WTC11 (cell line): ENCODE measurements at regions of chr10 and their contacts with region 1.

Region 1: DNA sequence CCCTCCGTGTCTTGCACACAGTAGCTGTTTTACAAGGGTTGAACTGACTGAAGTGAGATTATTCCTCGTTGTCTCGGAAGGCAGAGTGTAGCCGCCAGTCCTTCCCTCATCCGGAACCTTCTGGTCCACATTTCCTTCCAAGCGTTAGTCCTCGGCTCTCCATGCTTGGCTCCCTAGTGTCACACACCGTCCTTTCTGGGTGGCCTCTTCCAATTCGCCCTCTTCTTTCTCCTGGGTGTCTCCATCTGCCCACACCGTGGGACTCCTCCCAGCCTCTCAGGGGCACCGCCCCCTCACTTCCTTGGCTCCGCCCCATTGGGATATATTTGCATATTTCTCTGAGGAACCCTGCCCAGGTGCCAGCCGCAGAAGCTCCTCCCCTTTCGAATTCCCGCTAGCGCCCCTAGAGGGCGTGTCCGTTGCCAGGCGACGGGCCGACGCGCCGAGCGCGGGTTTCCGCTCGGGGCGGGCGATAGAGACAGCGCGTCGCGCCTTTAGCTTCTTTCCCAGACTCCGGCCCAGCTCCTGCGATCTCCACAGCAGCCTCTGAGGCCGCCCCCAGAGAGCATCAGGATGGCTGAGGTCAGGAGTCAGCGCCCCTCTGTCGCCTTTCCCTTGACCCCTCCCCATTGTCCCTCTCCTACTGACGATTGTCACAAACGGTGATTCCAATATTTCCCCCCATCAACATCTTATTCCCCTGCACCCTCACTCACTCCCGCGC is at the start of gene CFAP58:
- DNase-seq: peak; percentile 98
- ATAC-seq: peak; percentile 96
- H3K4me3 Mint-ChIP-seq: no peak within 1 kb of the TSS
- H3K27ac Mint-ChIP-seq: no peak within 1 kb of the TSS
- H3K4me1 Mint-ChIP-seq: peaks cover 9% of the 10 kb centered on the region
- H3K27me3 Mint-ChIP-seq: peaks cover 10% of the 10 kb centered on the region
- CTCF ChIP-seq: peak; percentile 73
- total RNA-seq, gene CFAP58: 0.92 to 1.1 TPM (median 1.0 TPM) in 3 replicates

Region 2: DNA sequence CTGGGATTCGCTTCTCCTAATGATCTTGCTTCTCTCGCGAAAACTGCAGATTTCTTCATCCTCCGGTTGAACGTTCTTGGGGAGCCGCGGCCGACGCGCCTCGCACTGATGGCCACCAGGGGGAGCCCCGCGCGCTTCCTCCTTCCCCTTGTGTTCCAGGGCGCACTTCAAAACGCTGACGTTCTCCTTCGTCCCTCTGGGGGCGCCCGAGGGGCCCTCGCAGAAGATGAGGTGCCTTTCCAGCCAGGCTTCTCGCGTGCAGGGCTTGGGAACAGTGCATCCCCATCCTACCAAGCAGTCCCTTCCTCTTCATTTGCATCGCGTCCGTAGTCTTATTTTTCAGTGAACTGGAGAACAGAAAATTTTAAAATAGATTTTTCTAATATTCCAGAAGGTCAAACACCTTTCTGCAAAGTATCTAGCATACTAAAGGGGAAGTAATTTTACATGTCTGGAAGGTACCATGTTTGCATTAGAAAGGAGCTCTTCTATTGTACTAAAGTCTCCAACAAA is 62.0 kb before region 1 on chr10:
- CTCF ChIA-PET with region 1: interaction called, 30 read pairs
- POLR2A ChIA-PET with region 1: interaction called, 3 read pairs
- DNase-seq: peak; percentile 90
- ATAC-seq: peak; percentile 99
- H3K4me3 Mint-ChIP-seq: peak overlapping the region; percentile 40
- H3K27ac Mint-ChIP-seq: no peak overlapping the region
- H3K4me1 Mint-ChIP-seq: peaks cover 23% of the 10 kb centered on the region
- H3K27me3 Mint-ChIP-seq: peaks cover 7% of the 10 kb centered on the region
- CTCF ChIP-seq: peak; percentile 99

Region 3: DNA sequence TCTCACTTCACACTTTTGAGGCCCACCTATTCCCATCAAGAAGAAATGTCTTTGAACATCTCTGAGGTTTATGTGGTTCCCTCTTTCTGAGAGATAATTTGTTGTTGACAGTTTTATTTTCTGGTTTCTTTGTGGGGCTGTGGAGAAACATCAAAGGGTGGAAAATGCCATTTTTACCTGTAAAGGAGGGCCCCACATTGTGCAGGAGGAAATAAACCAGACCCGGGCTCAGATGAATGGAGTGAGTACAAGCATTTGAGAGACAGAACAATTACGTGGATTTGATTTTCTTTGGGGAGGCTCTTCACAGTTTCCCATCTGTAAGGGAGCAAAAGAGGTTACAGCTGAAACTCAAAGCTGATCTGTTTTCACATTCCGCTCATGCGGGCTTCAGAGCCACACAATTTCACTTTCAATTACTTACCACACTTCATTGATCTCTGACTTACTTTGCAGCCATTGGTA is 45.0 kb before region 1 on chr10:
- CTCF ChIA-PET with region 1: interaction called, 55 read pairs
- POLR2A ChIA-PET with region 1: interaction called, 5 read pairs
- DNase-seq: no peak
- ATAC-seq: no peak
- H3K4me3 Mint-ChIP-seq: no peak overlapping the region
- H3K27ac Mint-ChIP-seq: no peak overlapping the region
- H3K4me1 Mint-ChIP-seq: peaks cover 6% of the 10 kb centered on the region
- H3K27me3 Mint-ChIP-seq: no peaks in the 10 kb centered on the region
- CTCF ChIP-seq: no peak

Region 4: DNA sequence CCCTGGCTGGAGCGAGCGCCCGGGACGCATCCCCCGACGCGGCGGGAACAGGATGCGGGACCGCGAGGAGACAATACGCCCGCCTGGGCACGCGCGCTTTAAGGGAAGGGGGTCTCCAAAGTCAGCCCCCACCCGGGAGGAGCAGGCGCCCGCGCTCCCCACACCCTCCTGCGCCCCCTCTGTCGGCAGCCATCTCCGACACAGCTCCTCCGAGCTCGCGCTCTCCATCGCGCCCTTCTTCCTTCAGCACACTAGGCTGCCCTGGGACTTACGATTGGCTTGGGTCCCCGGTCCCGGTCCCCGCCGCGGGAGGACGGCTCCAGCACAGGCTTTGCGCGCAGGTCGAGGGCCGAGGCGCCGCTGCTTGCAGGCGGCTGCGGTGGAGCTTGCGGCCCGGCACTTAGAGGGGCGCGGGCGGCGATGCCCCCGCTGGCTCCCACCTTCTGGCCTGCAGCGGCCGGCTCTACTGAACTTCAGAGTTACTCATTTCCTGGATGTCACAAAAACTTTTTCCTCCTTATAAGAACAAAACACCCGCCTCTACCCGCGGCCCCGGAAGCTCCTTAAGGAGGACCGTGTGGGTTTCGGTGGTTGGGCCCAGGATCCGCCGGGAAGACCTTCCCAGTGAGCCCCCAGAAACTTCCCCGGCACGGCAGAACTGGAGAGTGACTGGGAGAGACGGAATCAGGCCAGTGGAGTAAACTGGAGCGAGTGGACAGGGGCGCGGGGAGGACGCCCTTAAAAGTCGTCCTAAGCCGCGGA is 15.3 kb before region 1 on chr10 and contains the start of gene ITPRIP:
- CTCF ChIA-PET with region 1: interaction called, 27 read pairs
- POLR2A ChIA-PET with region 1: interaction called, 14 read pairs
- DNase-seq: peak; percentile 68
- ATAC-seq: peak; percentile 63
- H3K4me3 Mint-ChIP-seq: peak within 1 kb of the TSS; percentile 93
- H3K27ac Mint-ChIP-seq: peak within 1 kb of the TSS; percentile 99
- H3K4me1 Mint-ChIP-seq: peaks cover 60% of the 10 kb centered on the region
- H3K27me3 Mint-ChIP-seq: no peaks in the 10 kb centered on the region
- CTCF ChIP-seq: no peak
- total RNA-seq, gene ITPRIP: 13.0 to 16.8 TPM (median 13.4 TPM) in 3 replicates

Region 5: GRCh38 chr10:104393387-104393786 is 39.9 kb after region 1 on chr10:
- CTCF ChIA-PET with region 1: interaction called, 17 read pairs
- POLR2A ChIA-PET with region 1: no interaction called
- DNase-seq: no peak
- ATAC-seq: peak; percentile 65
- H3K4me3 Mint-ChIP-seq: no peak overlapping the region
- H3K27ac Mint-ChIP-seq: no peak overlapping the region
- H3K4me1 Mint-ChIP-seq: peaks cover 11% of the 10 kb centered on the region
- H3K27me3 Mint-ChIP-seq: no peaks in the 10 kb centered on the region; the same call in 1 of the 2 replicates
- CTCF ChIP-seq: no peak